ENCODE measurements at regions of chr4 and their contacts with region 1.

Region 1: DNA sequence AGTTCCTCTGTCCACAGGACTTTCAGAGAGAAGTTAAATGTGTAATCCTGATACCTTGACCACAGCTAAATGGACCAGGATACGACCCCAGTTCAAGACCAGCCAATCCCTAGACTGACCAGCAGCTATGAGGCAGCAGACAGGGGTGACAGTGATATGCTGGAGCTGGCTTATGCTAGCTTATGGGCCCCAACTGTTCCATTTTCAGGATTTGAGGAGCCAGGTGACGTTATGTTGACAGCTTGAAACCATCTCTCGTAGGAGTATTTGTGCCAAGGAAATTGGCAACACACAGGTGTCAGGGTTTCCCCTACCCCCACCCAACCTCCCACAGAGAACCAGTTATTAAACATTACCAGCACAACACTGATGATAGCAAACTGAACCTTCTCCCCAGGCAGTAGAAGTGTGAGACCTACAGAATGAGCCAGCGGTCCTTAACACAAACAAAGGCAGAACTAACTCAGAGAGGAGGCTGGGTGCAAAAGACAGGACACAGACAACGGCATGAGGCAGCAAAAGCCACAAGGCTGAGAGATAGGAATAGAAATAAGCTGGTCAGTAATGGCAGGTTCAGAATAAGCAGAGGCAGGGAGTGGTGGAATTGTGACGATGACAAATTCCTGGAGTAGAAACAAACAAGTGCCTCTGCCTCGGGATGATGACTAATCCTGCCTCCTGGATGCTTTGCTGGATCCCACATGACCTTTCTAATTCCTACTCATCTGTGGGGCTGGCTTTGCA is 85.6 kb upstream of the CPEB2 start:
- DNase-seq: no peak
- ATAC-seq: peak; percentile 56
- H3K4me3 ChIP-seq: no peak overlapping the region
- H3K27ac ChIP-seq: no peak overlapping the region
- H3K4me1 ChIP-seq: no peaks in the 10 kb centered on the region
- H3K27me3 ChIP-seq: no peaks in the 10 kb centered on the region
- CTCF ChIP-seq: no peak

Region 2: GRCh38 chr4:14800977-14801376 is 115.7 kb before region 1 on chr4:
- intact Hi-C with region 1: no loop called
- DNase-seq: no peak
- ATAC-seq: no peak
- H3K4me3 ChIP-seq: no peak overlapping the region
- H3K27ac ChIP-seq: no peak overlapping the region
- H3K4me1 ChIP-seq: no peaks in the 10 kb centered on the region
- H3K27me3 ChIP-seq: no peaks in the 10 kb centered on the region
- CTCF ChIP-seq: no peak

Region 3: GRCh38 chr4:14827111-14827510 is 89.6 kb before region 1 on chr4:
- intact Hi-C with region 1: loop called (anchors 10 kb)
- DNase-seq: no peak
- ATAC-seq: no peak
- H3K4me3 ChIP-seq: no peak overlapping the region
- H3K27ac ChIP-seq: no peak overlapping the region
- H3K4me1 ChIP-seq: no peaks in the 10 kb centered on the region
- H3K27me3 ChIP-seq: no peaks in the 10 kb centered on the region
- CTCF ChIP-seq: no peak

Region 4: GRCh38 chr4:15149839-15150476 is 233.2 kb after region 1 on chr4:
- intact Hi-C with region 1: no loop called
- DNase-seq: peak; percentile 82
- ATAC-seq: peak; percentile 79 to 85
- H3K4me3 ChIP-seq: no peak overlapping the region
- H3K27ac ChIP-seq: no peak overlapping the region
- H3K4me1 ChIP-seq: peaks cover 12% of the 10 kb centered on the region
- H3K27me3 ChIP-seq: no peaks in the 10 kb centered on the region
- CTCF ChIP-seq: no peak

Region 5: DNA sequence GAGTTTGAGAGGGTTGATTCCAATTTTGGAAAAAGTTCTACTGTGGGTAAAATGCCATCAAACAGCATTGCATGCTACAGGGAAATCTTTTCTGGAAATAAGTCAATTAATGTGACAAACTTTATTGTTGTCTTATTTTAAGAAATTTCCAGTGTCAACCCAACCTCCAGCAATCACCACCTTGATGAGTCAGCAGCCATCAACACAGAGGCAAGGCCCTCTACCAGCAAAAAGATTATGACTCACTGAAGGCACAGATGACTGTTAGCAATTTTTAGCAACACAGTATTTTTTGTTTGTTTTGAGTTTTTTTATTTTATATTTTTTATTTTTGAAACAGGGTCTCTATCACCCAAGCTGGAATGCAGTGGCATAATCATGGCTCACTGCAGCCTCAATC is 345.7 kb after region 1 on chr4:
- intact Hi-C with region 1: no loop called
- DNase-seq: no peak
- ATAC-seq: no peak
- H3K4me3 ChIP-seq: no peak overlapping the region
- H3K27ac ChIP-seq: no peak overlapping the region
- H3K4me1 ChIP-seq: no peaks in the 10 kb centered on the region
- H3K27me3 ChIP-seq: no peaks in the 10 kb centered on the region
- CTCF ChIP-seq: no peak

Measured in lower lobe of right lung (tissue), 2 donors.